ENCODE measurements at regions of chr12 and their contacts with region 1.

Region 1: GRCh38 chr12:70365648-70366518 is at the start of gene KCNMB4:
- DNase-seq: peak; percentile 94
- H3K4me3 Mint-ChIP-seq: peak within 1 kb of the TSS; percentile 92
- H3K27ac Mint-ChIP-seq: peak within 1 kb of the TSS; percentile 58
- H3K4me1 Mint-ChIP-seq: peaks cover 17% of the 10 kb centered on the region
- H3K27me3 Mint-ChIP-seq: peaks cover 39% of the 10 kb centered on the region
- total RNA-seq, gene KCNMB4: 0.17 and 0.19 TPM in 2 replicates

Region 2: DNA sequence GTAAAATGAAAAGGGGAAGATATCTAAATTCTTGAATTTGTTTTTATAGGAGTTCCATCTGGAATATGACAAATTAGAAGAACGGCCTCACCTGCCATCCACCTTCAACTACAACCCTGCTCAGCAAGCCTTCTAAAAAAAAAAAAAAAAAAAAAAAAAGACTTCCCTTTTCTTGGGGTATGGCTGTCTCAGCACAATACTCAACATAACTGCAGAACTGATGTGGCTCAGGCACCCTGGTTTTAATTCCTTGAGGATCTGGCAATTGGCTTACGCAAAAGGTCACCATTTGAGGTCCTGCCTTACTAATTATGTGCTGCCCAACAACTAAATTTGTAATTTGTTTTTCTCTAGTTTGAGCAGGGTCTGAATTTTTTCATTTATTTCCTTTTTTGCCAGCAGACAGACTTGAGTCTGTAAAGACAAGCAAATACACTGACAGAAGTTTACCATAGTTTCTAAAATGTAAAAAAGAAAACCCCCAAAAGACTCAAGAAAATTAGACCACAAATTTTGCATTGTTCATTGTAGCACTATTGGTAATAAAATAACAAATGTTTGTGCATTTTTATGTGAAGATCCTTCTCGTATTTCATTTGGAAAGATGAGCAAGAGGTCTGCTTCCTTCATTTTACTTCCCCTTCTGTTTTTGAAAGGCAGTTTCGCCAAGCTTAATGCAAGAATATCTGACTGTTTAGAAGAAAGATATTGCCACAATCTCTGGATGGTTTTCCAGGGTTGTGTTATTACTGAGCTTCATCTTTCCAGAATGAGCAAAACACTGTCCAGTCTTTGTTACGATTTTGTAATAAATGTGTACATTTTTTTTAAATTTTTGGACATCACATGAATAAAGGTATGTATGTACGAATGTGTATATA is 11.9 kb before region 1 on chr12:
- intact Hi-C with region 1: loop called (anchors 1 kb)
- DNase-seq: no peak
- H3K4me3 Mint-ChIP-seq: no peak overlapping the region
- H3K27ac Mint-ChIP-seq: no peak overlapping the region
- H3K4me1 Mint-ChIP-seq: no peaks in the 10 kb centered on the region
- H3K27me3 Mint-ChIP-seq: no peaks in the 10 kb centered on the region